IMR-90 (cell line): ENCODE measurements at regions of chr20 and their contacts with region 1.

Region 1: DNA sequence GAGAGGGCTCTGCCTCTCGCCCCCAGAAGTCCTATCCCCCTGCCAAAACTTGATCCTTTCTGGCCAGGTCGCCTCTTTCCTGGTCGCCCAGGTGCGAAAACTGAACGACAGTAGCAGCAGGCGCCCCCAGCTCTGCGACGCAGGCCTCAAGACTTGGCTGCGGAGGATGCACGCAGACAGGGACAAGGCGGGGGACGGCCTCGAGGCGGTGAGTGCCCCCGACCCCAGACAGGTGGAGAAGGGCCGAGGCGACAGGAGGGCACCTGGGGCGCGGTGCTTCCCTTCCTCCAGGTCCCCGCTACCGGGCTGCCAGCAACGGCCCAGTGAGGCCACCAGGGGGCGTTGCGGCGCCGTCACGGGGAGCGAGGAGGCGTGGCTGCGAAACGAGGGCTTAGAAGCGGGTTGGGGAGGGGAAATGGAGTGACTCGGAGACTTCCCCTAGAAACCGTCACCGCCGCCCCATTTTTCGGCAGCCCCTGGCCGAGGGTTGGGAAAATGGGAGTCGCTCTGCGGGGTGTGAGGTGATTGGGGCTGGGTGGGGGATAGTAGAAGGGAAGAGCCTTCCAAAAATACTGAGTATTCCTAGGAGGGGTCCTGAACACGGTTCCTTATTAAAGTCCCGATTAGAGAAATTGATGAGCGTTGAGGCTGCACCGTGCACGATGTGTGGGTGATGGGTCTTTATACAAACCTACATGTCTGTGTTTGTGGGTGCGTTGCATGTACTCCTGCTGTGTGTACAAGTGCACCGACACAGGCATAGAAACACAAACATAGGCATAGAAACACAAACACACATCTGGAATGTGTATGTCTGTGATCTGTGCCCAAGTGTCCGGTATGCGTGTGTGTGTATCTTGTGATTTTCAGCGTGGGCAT is 44.6 kb downstream of the ARHGAP40 start:
- DNase-seq: peak; percentile 50
- ATAC-seq: peak; percentile 99
- H3K4me3 ChIP-seq: no peak overlapping the region
- H3K27ac ChIP-seq: no peak overlapping the region
- H3K4me1 ChIP-seq: no peaks in the 10 kb centered on the region
- H3K27me3 ChIP-seq: peaks cover 42% of the 10 kb centered on the region
- CTCF ChIP-seq: peak; percentile 90
- POLR2A ChIP-seq: no peak
- RAD21 ChIP-seq: peak; percentile 86

Region 2: GRCh38 chr20:38573413-38573812 is 72.8 kb before region 1 on chr20:
- CTCF ChIA-PET with region 1: no interaction called
- POLR2A ChIA-PET with region 1: no interaction called
- dilution Hi-C with region 1: no loop called
- in situ Hi-C with region 1: no loop called
- intact Hi-C with region 1: no loop called
- DNase-seq: no peak
- ATAC-seq: no peak
- H3K4me3 ChIP-seq: no peak overlapping the region
- H3K27ac ChIP-seq: no peak overlapping the region
- H3K4me1 ChIP-seq: no peaks in the 10 kb centered on the region
- H3K27me3 ChIP-seq: no peaks in the 10 kb centered on the region
- CTCF ChIP-seq: no peak
- POLR2A ChIP-seq: no peak
- RAD21 ChIP-seq: no peak

Region 3: GRCh38 chr20:38730989-38731737 is 84.9 kb after region 1 on chr20:
- CTCF ChIA-PET with region 1: no interaction called
- POLR2A ChIA-PET with region 1: no interaction called
- dilution Hi-C with region 1: no loop called
- in situ Hi-C with region 1: loop called (anchors 10 kb)
- intact Hi-C with region 1: loop called (anchors 1 kb)
- DNase-seq: peak; percentile 31
- ATAC-seq: peak; percentile 87
- H3K4me3 ChIP-seq: no peak overlapping the region
- H3K27ac ChIP-seq: no peak overlapping the region
- H3K4me1 ChIP-seq: no peaks in the 10 kb centered on the region
- H3K27me3 ChIP-seq: peaks cover 70% of the 10 kb centered on the region
- CTCF ChIP-seq: peak; percentile 67
- POLR2A ChIP-seq: no peak
- RAD21 ChIP-seq: peak; percentile 39

Region 4: GRCh38 chr20:38748097-38748860 is 102.1 kb after region 1 on chr20 and contains the start of gene ACTR5:
- CTCF ChIA-PET with region 1: no interaction called
- POLR2A ChIA-PET with region 1: no interaction called
- dilution Hi-C with region 1: no loop called
- in situ Hi-C with region 1: loop called (anchors 5 kb)
- intact Hi-C with region 1: loop called (anchors 1 kb)
- DNase-seq: peak; percentile 80
- ATAC-seq: peak; percentile 96
- H3K4me3 ChIP-seq: peak within 1 kb of the TSS; percentile 84
- H3K27ac ChIP-seq: peak within 1 kb of the TSS; percentile 81
- H3K4me1 ChIP-seq: peaks cover 5% of the 10 kb centered on the region; the same call in 1 of the 2 replicates
- H3K27me3 ChIP-seq: peaks cover 5% of the 10 kb centered on the region; the same call in 1 of the 2 replicates
- CTCF ChIP-seq: no peak
- POLR2A ChIP-seq: peak; percentile 27; the same call in 1 of the 2 replicates
- RAD21 ChIP-seq: no peak
- total RNA-seq, gene ACTR5: 5.3 and 6.6 TPM in 2 replicates

Region 5: GRCh38 chr20:38790200-38791053 is 144.2 kb after region 1 on chr20:
- CTCF ChIA-PET with region 1: no interaction called
- POLR2A ChIA-PET with region 1: no interaction called
- dilution Hi-C with region 1: no loop called
- in situ Hi-C with region 1: no loop called
- intact Hi-C with region 1: loop called (anchors 1 kb)
- DNase-seq: peak; percentile 38
- ATAC-seq: peak; percentile 75
- H3K4me3 ChIP-seq: no peak overlapping the region
- H3K27ac ChIP-seq: no peak overlapping the region
- H3K4me1 ChIP-seq: no peaks in the 10 kb centered on the region
- H3K27me3 ChIP-seq: peaks cover 6% of the 10 kb centered on the region
- CTCF ChIP-seq: peak; percentile 52
- POLR2A ChIP-seq: no peak
- RAD21 ChIP-seq: peak; percentile 34

Region 6: DNA sequence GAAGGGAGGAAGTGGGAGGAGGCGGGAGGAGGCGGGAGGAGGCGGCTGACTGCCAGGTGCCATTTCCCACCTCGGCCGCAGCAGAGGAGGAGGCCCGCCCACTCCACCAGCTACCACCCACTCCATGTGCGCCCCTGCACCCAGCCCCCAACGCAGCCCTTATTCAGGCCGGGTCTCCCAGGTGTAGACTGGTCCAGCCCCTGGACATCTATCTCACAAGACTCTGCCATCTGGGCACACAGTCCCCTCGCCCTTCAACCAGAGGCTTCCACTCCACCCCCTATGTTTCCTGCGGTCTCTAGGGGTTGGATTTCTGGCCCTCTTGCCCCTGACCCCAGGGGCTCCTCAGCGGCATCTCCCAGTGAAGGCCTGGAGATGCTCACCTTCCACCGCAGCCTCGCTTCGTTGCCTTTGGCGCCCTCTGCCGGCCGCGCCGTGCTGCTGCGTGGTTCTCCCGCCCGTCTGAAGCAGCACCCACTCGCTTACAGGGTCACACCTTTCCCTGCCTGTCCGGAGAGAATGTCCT is 247.4 kb after region 1 on chr20:
- CTCF ChIA-PET with region 1: no interaction called
- POLR2A ChIA-PET with region 1: no interaction called
- dilution Hi-C with region 1: no loop called
- in situ Hi-C with region 1: loop called (anchors 10 kb)
- intact Hi-C with region 1: loop called (anchors 1 kb)
- DNase-seq: peak; percentile 18
- ATAC-seq: peak; percentile 97
- H3K4me3 ChIP-seq: no peak overlapping the region
- H3K27ac ChIP-seq: no peak overlapping the region
- H3K4me1 ChIP-seq: no peaks in the 10 kb centered on the region
- H3K27me3 ChIP-seq: peaks cover 26% of the 10 kb centered on the region
- CTCF ChIP-seq: peak; percentile 84
- POLR2A ChIP-seq: no peak
- RAD21 ChIP-seq: peak; percentile 71

Region 7: DNA sequence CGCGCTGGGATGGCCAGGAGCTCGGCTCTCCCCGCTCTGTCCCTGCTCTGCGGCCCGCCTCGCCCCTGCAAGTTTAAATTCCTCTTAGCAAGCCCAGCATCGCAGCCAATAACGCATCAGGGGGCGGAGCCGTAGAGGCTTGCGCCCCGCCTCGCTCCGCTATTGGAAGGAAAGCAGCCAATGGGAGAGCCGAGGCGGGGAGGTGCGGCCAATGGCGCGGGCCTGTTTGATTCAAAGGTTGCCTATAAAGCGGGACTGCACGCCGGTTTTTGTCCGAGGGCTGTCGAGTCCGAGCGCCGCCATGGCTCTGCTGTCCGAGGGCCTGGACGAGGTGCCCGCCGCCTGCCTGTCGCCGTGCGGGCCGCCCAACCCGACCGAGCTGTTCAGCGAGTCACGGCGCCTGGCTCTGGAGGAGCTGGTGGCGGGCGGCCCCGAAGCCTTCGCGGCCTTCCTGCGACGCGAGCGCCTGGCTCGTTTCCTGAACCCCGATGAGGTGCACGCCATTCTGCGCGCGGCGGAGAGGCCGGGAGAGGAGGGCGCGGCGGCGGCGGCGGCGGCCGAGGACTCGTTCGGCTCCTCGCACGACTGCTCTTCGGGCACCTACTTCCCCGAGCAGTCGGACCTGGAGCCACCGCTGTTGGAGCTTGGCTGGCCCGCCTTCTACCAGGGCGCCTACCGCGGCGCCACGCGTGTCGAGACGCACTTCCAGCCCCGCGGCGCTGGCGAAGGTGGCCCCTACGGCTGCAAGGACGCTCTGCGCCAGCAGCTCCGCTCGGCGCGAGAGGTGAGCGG is 280.1 kb after region 1 on chr20 and contains the start of gene FAM83D:
- CTCF ChIA-PET with region 1: no interaction called
- POLR2A ChIA-PET with region 1: no interaction called
- dilution Hi-C with region 1: no loop called
- in situ Hi-C with region 1: no loop called
- intact Hi-C with region 1: loop called (anchors 1 kb)
- DNase-seq: peak; percentile 97
- ATAC-seq: peak; percentile 99
- H3K4me3 ChIP-seq: peak within 1 kb of the TSS; percentile 66
- H3K27ac ChIP-seq: peak within 1 kb of the TSS; percentile 12; the same call in 1 of the 2 replicates
- H3K4me1 ChIP-seq: peaks cover 5% of the 10 kb centered on the region
- H3K27me3 ChIP-seq: peaks cover 8% of the 10 kb centered on the region
- CTCF ChIP-seq: peak; percentile 83; the same call in 1 of the 2 replicates
- POLR2A ChIP-seq: peak; percentile 93
- RAD21 ChIP-seq: no peak; the same call in none of the 2 replicates
- total RNA-seq, gene FAM83D: 20.4 and 23.1 TPM in 2 replicates

Region 8: DNA sequence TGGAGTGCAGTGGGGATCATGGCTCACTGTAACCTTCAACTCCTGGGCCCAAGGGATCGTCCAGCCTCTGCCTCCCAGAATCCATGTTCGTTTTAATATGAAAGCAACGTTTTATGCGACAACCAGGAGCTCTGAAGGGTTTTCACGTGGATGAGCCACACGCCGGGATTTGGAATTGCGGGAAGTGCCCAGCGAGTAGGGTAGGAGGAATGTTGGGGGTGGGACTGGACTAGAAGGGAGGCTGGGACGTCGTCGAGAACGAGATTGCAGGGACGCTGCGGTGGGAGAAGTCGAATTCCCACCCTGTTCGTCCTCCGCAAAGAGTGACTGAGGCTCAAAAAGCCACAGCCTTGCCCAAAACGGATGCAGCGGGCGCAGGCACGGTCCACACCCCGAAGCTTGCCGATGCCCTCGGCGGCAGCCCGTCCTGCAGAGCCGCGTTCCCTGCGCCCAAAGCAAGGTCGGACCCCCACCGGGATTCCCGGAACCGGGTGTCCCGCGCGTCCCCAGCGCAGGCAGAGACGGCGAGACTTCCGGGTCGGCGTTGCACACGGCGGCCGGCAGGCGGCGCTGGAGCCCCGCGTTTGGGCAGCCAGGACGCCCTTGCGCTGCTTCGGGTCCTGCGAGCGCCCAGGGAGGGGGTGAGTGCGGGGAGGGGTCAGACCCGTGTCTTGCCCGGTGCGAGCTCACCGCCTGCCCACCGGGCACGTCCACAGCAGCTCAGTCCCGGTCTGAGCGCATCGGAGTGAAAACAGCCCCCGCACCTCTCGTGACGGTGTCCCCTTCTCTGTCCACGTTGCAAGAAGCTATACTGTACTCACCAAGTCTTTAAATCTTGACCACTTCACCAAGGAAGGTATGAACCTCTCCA is 403.7 kb after region 1 on chr20:
- CTCF ChIA-PET with region 1: no interaction called
- POLR2A ChIA-PET with region 1: no interaction called
- dilution Hi-C with region 1: no loop called
- in situ Hi-C with region 1: loop called (anchors 10 kb)
- intact Hi-C with region 1: loop called (anchors 1 kb)
- DNase-seq: peak; percentile 51
- ATAC-seq: peak; percentile 91
- H3K4me3 ChIP-seq: peak overlapping the region; percentile 71
- H3K27ac ChIP-seq: peak overlapping the region; percentile 71
- H3K4me1 ChIP-seq: peaks cover 2% of the 10 kb centered on the region; the same call in 1 of the 2 replicates
- H3K27me3 ChIP-seq: peaks cover 3% of the 10 kb centered on the region; the same call in 1 of the 2 replicates
- CTCF ChIP-seq: peak; percentile 96
- POLR2A ChIP-seq: no peak
- RAD21 ChIP-seq: peak; percentile 89